ENCODE measurements at regions of chr4 and their contacts with region 1.

Region 1: GRCh38 chr4:87006676-87007527 is 72.1 kb downstream of the AFF1 start:
- DNase-seq: peak; percentile 87 to 94
- H3K4me3 ChIP-seq: peak overlapping the region; percentile 86
- H3K4me1 ChIP-seq: peaks cover 35% of the 10 kb centered on the region
- H3K27me3 ChIP-seq: no peaks in the 10 kb centered on the region

Region 2: DNA sequence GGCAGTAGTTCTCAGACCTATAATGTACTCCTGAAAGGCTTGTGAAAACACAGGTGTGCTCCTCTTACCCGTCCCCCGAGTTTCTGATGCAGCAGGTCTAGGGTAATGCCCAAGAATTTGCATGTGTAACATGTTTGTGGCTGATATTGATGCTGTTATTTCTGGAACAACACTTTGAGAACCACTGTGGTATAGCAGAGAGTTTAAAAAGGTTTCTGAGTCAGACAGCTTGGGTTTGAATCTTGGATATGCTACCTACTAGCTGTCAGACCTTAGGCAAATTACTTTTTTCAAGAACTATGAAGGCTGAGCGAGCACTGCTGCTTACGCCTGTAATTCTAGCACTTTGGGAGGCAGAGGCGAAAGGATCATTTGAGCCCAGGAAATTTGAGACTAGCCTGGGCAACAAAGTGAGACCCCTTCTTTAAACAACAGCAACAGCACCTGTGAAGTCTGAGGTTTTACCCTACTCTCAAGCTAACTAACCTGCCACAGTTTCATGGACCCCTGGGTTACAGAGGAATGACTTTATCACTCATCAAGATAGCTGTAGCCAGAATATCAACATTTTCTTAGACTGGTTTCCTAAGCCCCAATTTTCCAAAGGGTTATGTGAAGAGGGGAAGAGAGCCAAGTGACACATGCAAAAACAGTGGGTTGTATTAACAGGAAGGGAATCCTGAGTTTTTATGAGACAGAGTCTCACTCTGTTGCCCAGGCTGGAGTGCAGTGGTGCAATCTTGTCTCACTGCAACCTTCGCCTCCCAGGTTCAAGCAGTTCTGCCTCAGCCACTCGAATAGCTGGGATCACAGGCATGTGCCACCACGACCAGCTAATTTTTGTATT is 67.0 kb before region 1 on chr4:
- in situ Hi-C with region 1: loop called (anchors 10 kb)
- DNase-seq: no peak
- H3K4me3 ChIP-seq: no peak overlapping the region
- H3K4me1 ChIP-seq: peaks cover 23% of the 10 kb centered on the region
- H3K27me3 ChIP-seq: no peaks in the 10 kb centered on the region